Caco-2 (cell line): ENCODE measurements at regions of chr4 and their contacts with region 1.

Region 1: DNA sequence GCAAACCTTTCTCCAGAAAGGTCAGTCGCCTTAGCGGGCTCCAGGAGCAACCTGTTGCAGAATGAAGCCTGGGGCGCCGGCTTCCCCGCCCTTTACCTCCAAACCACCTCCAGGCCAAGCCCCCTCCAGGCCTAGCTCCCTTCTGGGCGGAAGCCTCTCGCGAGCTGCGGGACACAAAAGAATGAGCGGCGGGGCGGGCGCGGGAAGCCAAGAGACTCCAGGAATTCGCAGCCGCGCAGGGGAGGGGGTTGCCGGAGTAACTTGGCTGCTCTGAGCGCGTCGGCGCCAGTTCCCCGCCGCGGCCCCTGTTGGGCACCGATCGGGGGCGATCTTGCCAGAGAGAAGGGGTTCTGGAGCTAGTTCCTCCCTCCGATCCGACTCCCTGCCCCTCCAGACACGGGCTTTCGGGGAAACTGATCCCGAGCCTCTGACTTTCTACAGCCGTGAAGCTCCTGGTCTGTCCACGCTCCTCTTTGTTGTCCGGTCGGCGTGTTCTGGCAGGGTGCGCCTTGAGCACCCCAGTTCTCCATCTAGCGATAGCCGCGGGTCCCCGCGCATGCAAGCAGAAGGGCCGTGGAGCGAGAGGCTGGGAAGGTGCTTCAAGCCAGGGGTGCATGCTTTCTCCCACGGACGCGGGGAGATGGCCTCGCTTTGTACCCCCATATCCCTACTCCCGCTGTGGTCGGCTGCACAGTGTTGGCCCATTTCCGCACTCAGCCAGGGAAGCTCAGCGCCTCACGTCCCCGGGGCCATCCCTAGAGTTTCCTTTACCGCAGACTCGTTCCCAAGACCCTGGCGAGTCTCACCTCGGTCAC is 1.2 kb downstream of the PROM1 start:
- DNase-seq: peak; percentile 80 to 81
- H3K4me3 ChIP-seq: peak overlapping the region; percentile 98
- H3K4me3 Mint-ChIP-seq: peak overlapping the region; percentile 91
- H3K27ac Mint-ChIP-seq: peak overlapping the region; percentile 85
- H3K4me1 ChIP-seq: peaks cover 11% of the 10 kb centered on the region
- H3K4me1 Mint-ChIP-seq: peaks cover 23% of the 10 kb centered on the region
- H3K27me3 ChIP-seq: no peaks in the 10 kb centered on the region
- H3K27me3 Mint-ChIP-seq: no peaks in the 10 kb centered on the region
- CTCF ChIP-seq: no peak

Region 2: GRCh38 chr4:15729910-15730533 is 352.6 kb before region 1 on chr4:
- CTCF ChIA-PET with region 1: no interaction called
- POLR2A ChIA-PET with region 1: no interaction called
- intact Hi-C with region 1: no loop called
- DNase-seq: peak in 1 of 2 experiments; percentile 38
- H3K4me3 ChIP-seq: no peak overlapping the region
- H3K4me3 Mint-ChIP-seq: no peak overlapping the region
- H3K27ac Mint-ChIP-seq: no peak overlapping the region
- H3K4me1 ChIP-seq: no peaks in the 10 kb centered on the region
- H3K4me1 Mint-ChIP-seq: no peaks in the 10 kb centered on the region
- H3K27me3 ChIP-seq: no peaks in the 10 kb centered on the region
- H3K27me3 Mint-ChIP-seq: peaks cover 3% of the 10 kb centered on the region
- CTCF ChIP-seq: peak; percentile 66 to 67

Region 3: GRCh38 chr4:16026160-16026761 is 56.4 kb before region 1 on chr4:
- CTCF ChIA-PET with region 1: no interaction called
- POLR2A ChIA-PET with region 1: no interaction called
- intact Hi-C with region 1: loop called (anchors 1 kb)
- DNase-seq: peak in 1 of 2 experiments; percentile 62
- H3K4me3 ChIP-seq: no peak overlapping the region
- H3K4me3 Mint-ChIP-seq: no peak overlapping the region
- H3K27ac Mint-ChIP-seq: no peak overlapping the region
- H3K4me1 ChIP-seq: peaks cover 39% of the 10 kb centered on the region
- H3K4me1 Mint-ChIP-seq: peaks cover 12% of the 10 kb centered on the region
- H3K27me3 ChIP-seq: no peaks in the 10 kb centered on the region
- H3K27me3 Mint-ChIP-seq: no peaks in the 10 kb centered on the region
- CTCF ChIP-seq: peak; percentile 56 to 70

Region 4: DNA sequence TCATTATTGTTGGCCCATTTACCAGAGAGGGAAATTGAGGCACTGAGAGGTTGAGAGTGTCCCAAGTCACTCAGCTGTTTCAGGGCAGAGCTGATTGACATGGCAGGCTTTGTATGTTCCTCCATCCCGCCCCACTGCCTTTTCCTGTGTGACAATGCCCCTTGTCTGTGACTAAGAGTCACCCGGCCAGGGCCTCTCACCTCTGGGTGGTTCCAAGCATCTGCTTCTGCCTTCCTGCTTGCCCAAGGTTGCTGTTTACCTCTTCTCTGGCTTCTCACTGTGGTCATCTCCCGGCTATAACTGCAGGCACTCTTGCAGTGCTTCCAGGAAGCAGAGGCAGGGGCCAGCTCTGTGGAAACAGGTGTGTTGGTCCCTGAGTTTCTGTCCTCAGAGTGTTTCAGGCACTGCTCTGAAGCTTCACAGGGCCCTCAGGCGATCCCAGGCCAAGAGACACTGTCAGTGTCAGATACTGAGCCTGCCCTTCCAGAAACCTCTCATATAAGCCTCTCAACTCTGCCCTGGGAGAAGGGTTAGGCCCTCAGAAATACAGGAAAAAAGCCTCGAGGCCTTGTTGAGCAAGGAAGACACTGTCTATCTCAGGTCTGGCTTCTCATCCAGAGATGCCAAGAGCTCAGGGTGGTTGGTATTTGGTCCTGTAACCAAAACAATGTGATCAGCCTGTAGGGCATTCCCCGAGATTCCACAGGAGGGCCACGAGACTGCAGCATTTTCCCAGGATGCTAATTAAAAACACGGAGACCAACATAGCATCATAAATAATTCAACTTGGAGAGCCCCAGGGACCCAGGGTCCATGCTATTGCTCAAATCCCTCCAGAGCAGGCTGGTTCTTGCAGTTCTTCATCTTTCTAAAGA is 43.2 kb after region 1 on chr4:
- CTCF ChIA-PET with region 1: no interaction called
- POLR2A ChIA-PET with region 1: interaction called, 4 read pairs
- intact Hi-C with region 1: loop called (anchors 5 kb)
- DNase-seq: no peak
- H3K4me3 ChIP-seq: no peak overlapping the region
- H3K4me3 Mint-ChIP-seq: no peak overlapping the region
- H3K27ac Mint-ChIP-seq: no peak overlapping the region
- H3K4me1 ChIP-seq: peaks cover 27% of the 10 kb centered on the region
- H3K4me1 Mint-ChIP-seq: peaks cover 38% of the 10 kb centered on the region
- H3K27me3 ChIP-seq: no peaks in the 10 kb centered on the region
- H3K27me3 Mint-ChIP-seq: no peaks in the 10 kb centered on the region
- CTCF ChIP-seq: no peak

Region 5: GRCh38 chr4:16196478-16197393 is 114.1 kb after region 1 on chr4:
- CTCF ChIA-PET with region 1: interaction called, 6 read pairs
- POLR2A ChIA-PET with region 1: interaction called, 3 read pairs
- intact Hi-C with region 1: loop called (anchors 2 kb)
- DNase-seq: peak in 1 of 2 experiments; percentile 67
- H3K4me3 ChIP-seq: no peak overlapping the region
- H3K4me3 Mint-ChIP-seq: peak overlapping the region; percentile 52
- H3K27ac Mint-ChIP-seq: peak overlapping the region; percentile 83
- H3K4me1 ChIP-seq: no peaks in the 10 kb centered on the region; the same call in 1 of the 2 replicates
- H3K4me1 Mint-ChIP-seq: peaks cover 14% of the 10 kb centered on the region
- H3K27me3 ChIP-seq: no peaks in the 10 kb centered on the region
- H3K27me3 Mint-ChIP-seq: no peaks in the 10 kb centered on the region
- CTCF ChIP-seq: peak in 1 of 2 experiments; percentile 41